ENCODE measurements at regions of chr10 and their contacts with region 1.

Region 1: GRCh38 chr10:61992671-61993668 is 91.5 kb downstream of the ARID5B start:
- DNase-seq: peak in 8 of 9 experiments; percentile 15 to 88 (median 47)
- ATAC-seq: peak; percentile 83
- H3K4me3 ChIP-seq: peak overlapping the region in 1 of 2 experiments; percentile 27
- H3K4me3 Mint-ChIP-seq: peak overlapping the region; percentile 64
- H3K27ac ChIP-seq: peak overlapping the region; percentile 20 to 85
- H3K27ac Mint-ChIP-seq: peak overlapping the region; percentile 90
- H3K4me1 ChIP-seq: peaks cover 16% of the 10 kb centered on the region
- H3K4me1 Mint-ChIP-seq: peaks cover 48% of the 10 kb centered on the region
- H3K27me3 ChIP-seq: no peaks in the 10 kb centered on the region
- H3K27me3 Mint-ChIP-seq: no peaks in the 10 kb centered on the region
- CTCF ChIP-seq: no peak

Region 2: DNA sequence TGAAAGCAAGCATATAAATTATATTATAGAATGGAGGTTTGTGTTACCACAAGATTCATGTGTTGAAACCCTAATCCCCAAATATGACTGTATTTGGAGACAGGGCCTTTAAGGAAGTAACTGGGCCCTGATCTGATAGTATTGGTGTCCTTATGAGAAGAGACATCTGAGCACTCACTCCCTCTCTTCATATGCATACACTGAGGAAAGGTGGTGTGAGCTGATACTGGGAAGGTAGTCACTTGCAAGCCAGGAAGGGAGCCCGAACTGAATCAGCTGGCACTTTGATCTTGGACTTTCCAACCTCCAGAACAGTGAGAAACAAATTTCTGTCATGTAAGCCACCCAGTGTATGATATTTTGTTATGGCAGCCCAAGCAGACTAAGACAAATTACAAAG is 982.1 kb before region 1 on chr10:
- CTCF ChIA-PET with region 1: no interaction called
- POLR2A ChIA-PET with region 1: no interaction called
- intact Hi-C with region 1: no loop called
- DNase-seq: no peak
- ATAC-seq: no peak
- H3K4me3 ChIP-seq: no peak overlapping the region
- H3K4me3 Mint-ChIP-seq: no peak overlapping the region
- H3K27ac ChIP-seq: no peak overlapping the region
- H3K27ac Mint-ChIP-seq: no peak overlapping the region
- H3K4me1 ChIP-seq: no peaks in the 10 kb centered on the region
- H3K4me1 Mint-ChIP-seq: no peaks in the 10 kb centered on the region
- H3K27me3 ChIP-seq: no peaks in the 10 kb centered on the region
- H3K27me3 Mint-ChIP-seq: peaks cover 4% of the 10 kb centered on the region
- CTCF ChIP-seq: no peak

Region 3: DNA sequence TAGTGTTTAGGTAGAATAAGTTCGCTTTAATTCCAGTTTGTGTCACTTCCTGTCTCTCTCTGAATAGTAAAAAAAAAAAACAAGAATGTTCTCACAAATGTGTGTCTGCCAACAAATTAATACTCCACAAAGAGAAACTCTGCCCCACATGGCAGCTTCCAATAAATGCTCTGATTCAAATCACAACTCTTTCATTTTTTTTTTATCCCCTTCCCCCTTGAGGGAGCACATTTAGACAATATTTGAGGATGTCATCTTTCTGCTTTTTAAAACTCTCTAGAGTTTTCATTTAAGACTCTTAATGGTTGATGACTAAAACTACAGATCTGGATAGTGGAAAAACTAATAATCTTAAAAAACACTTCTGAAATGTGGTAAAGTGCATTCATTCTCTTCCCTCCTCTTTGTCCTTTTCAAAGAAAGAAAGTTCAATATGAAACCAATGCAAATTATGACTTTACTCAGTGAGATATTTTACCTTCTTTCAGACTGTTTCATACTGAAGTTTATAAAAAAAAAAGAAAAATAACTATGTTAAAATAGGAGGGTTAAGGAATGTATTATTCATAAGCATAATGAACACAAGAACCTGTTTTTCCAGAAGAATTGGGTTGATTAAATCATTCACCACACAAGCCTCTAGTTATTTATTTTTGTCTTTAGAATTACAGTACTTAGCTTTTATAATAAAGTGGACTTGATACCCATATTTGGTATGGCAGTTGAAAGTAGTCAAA is 49.1 kb before region 1 on chr10:
- CTCF ChIA-PET with region 1: no interaction called
- POLR2A ChIA-PET with region 1: no interaction called
- intact Hi-C with region 1: loop called in 1 of 2 experiments (anchors 2 kb)
- DNase-seq: peak in 2 of 9 experiments; percentile 54 to 75
- ATAC-seq: peak; percentile 61
- H3K4me3 ChIP-seq: peak overlapping the region; percentile 2 to 33
- H3K4me3 Mint-ChIP-seq: peak overlapping the region; percentile 71
- H3K27ac ChIP-seq: peak overlapping the region in 1 of 2 experiments; percentile 87
- H3K27ac Mint-ChIP-seq: peak overlapping the region; percentile 86
- H3K4me1 ChIP-seq: peaks cover 22% of the 10 kb centered on the region
- H3K4me1 Mint-ChIP-seq: peaks cover 57% of the 10 kb centered on the region
- H3K27me3 ChIP-seq: no peaks in the 10 kb centered on the region
- H3K27me3 Mint-ChIP-seq: no peaks in the 10 kb centered on the region
- CTCF ChIP-seq: no peak

Region 4: DNA sequence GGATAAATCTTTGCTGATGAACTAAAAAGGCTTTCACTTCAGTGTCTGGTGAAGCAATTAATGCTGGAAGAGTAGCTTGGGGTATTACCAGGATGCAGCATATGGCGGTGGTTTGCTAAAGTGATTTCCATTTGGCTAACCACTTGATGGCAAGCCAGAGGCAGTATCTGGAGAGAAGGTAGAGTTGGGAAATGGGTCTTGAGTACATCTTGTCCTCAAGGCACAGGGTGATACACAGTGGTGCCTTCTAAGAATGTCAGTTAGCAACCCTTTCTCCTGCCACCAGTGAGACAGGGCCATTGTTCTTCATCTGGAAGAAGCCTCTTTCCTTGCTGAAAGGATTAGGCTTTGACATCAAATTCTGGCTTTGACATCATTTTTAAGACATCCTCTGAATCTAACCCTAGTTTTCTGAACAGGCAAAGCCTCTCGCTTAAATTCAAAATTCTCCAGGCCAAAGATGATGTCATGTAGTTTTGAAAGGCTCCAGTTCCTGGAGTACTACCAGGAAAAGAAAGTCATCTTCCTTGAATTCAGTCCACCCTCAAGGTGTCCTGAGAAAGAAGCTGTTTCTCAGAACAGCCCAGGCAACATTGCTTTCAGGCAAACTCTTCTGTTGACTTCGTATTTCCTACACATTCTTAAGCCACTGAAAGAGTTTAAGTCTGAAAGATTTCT is 71.0 kb after region 1 on chr10:
- CTCF ChIA-PET with region 1: no interaction called
- POLR2A ChIA-PET with region 1: no interaction called
- intact Hi-C with region 1: no loop called
- DNase-seq: no peak
- ATAC-seq: no peak
- H3K4me3 ChIP-seq: no peak overlapping the region
- H3K4me3 Mint-ChIP-seq: no peak overlapping the region
- H3K27ac ChIP-seq: no peak overlapping the region
- H3K27ac Mint-ChIP-seq: no peak overlapping the region
- H3K4me1 ChIP-seq: no peaks in the 10 kb centered on the region
- H3K4me1 Mint-ChIP-seq: peaks cover 17% of the 10 kb centered on the region
- H3K27me3 ChIP-seq: no peaks in the 10 kb centered on the region
- H3K27me3 Mint-ChIP-seq: no peaks in the 10 kb centered on the region
- CTCF ChIP-seq: no peak

Measured in CD8-positive, alpha-beta T cell (primary cell).